Activated CD4-positive, alpha-beta T cell treated with anti-CD3 and anti-CD28 coated beads for 36 hours (primary cell): ENCODE measurements at regions of chr5 and their contacts with region 1.

Region 1: GRCh38 chr5:54944364-54944763 is 41.0 kb downstream of the ESM1 start:
- DNase-seq: peak; percentile 38
- ATAC-seq: peak; percentile 49
- H3K4me3 Mint-ChIP-seq: no peak overlapping the region
- H3K27ac Mint-ChIP-seq: no peak overlapping the region
- H3K4me1 Mint-ChIP-seq: no peaks in the 10 kb centered on the region
- H3K27me3 Mint-ChIP-seq: peaks cover 2% of the 10 kb centered on the region

Region 2: DNA sequence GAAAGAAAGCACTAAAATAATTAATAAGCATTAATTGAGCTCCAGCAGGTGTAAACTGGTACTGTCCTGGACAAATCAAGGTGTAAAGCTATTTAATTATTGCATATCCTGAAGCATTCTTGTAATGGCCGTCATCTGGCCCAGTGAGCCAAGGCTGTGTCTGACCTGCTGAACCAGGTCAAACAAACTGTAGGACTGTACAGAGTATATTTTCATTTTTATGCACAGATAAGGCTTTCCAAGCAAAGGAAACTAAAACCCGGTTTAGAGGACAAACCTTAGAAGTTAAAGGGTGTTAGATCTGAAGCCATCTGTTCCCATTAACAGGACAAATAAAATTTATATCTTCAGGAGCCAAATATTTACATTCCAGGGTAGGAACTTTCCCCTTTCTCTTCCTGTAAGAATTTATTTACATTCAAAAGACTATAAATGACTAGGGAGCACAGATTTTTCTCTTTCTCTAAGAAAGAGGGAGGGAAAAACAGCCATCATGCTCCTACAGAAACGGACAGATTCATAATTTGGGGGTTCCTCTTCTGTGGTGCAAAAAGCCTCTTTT is 28.8 kb before region 1 on chr5:
- CTCF ChIA-PET with region 1: interaction called, 12 read pairs
- POLR2A ChIA-PET with region 1: no interaction called
- intact Hi-C with region 1: no loop called
- DNase-seq: no peak
- ATAC-seq: no peak
- H3K4me3 Mint-ChIP-seq: no peak overlapping the region
- H3K27ac Mint-ChIP-seq: no peak overlapping the region
- H3K4me1 Mint-ChIP-seq: no peaks in the 10 kb centered on the region
- H3K27me3 Mint-ChIP-seq: peaks cover 19% of the 10 kb centered on the region

Region 3: GRCh38 chr5:54930736-54931135 is 13.6 kb before region 1 on chr5:
- CTCF ChIA-PET with region 1: interaction called, 22 read pairs
- POLR2A ChIA-PET with region 1: no interaction called
- intact Hi-C with region 1: no loop called
- DNase-seq: peak; percentile 27
- ATAC-seq: peak; percentile 19
- H3K4me3 Mint-ChIP-seq: no peak overlapping the region
- H3K27ac Mint-ChIP-seq: no peak overlapping the region
- H3K4me1 Mint-ChIP-seq: peaks cover 3% of the 10 kb centered on the region
- H3K27me3 Mint-ChIP-seq: peaks cover 17% of the 10 kb centered on the region

Region 4: GRCh38 chr5:54959673-54960418 is 15.5 kb after region 1 on chr5:
- CTCF ChIA-PET with region 1: interaction called, 28 read pairs
- POLR2A ChIA-PET with region 1: no interaction called
- intact Hi-C with region 1: no loop called
- DNase-seq: peak; percentile 69
- ATAC-seq: no peak
- H3K4me3 Mint-ChIP-seq: no peak overlapping the region
- H3K27ac Mint-ChIP-seq: no peak overlapping the region
- H3K4me1 Mint-ChIP-seq: no peaks in the 10 kb centered on the region
- H3K27me3 Mint-ChIP-seq: peaks cover 5% of the 10 kb centered on the region

Region 5: GRCh38 chr5:54975701-54976100 is 31.3 kb after region 1 on chr5:
- CTCF ChIA-PET with region 1: interaction called, 11 read pairs
- POLR2A ChIA-PET with region 1: no interaction called
- intact Hi-C with region 1: no loop called
- DNase-seq: no peak
- ATAC-seq: no peak
- H3K4me3 Mint-ChIP-seq: no peak overlapping the region
- H3K27ac Mint-ChIP-seq: no peak overlapping the region
- H3K4me1 Mint-ChIP-seq: peaks cover 2% of the 10 kb centered on the region
- H3K27me3 Mint-ChIP-seq: peaks cover 2% of the 10 kb centered on the region

Region 6: GRCh38 chr5:55146543-55147151 is 202.3 kb after region 1 on chr5:
- CTCF ChIA-PET with region 1: interaction called, 57 read pairs
- POLR2A ChIA-PET with region 1: interaction called, 4 read pairs
- intact Hi-C with region 1: loop called (anchors 1 kb)
- DNase-seq: peak; percentile 88
- ATAC-seq: peak; percentile 95
- H3K4me3 Mint-ChIP-seq: no peak overlapping the region
- H3K27ac Mint-ChIP-seq: no peak overlapping the region
- H3K4me1 Mint-ChIP-seq: peaks cover 15% of the 10 kb centered on the region
- H3K27me3 Mint-ChIP-seq: peaks cover 15% of the 10 kb centered on the region

Region 7: DNA sequence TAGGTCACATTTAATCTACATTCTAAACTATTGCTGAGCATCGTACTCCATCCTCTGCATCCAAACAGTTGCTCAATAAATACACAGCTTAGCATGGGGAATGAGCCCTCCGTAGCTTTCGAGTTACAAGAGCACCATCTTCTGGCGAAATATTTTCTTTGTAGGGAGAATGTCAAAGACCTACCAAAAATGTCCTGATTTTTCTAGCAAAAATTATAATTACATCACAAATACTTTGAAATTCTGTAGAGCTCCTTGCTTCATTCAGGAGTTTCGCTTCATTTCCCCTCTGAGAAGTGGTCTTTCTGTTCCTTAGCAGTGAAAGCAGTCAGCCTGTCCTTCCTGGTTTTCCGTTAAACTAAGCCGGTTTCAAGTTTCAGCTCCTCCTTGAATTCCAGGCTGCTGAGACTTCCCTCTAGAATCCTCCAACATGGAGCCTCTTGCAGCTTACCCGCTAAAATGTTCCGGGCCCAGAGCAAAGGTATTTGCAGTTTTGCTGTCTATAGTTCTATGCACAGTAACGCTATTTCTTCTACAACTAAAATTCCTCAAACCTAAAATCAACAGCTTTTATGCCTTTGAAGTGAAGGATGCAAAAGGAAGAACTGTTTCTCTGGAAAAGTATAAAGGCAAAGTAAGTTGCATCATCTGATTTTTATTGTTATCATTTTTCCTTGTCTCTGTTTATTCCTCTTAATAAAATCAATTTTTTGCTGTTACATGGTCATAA is 215.6 kb after region 1 on chr5 and contains the start of gene GPX8:
- CTCF ChIA-PET with region 1: interaction called, 27 read pairs
- POLR2A ChIA-PET with region 1: no interaction called
- intact Hi-C with region 1: no loop called
- DNase-seq: peak; percentile 27
- ATAC-seq: peak; percentile 57
- H3K4me3 Mint-ChIP-seq: no peak within 1 kb of the TSS
- H3K27ac Mint-ChIP-seq: no peak within 1 kb of the TSS
- H3K4me1 Mint-ChIP-seq: no peaks in the 10 kb centered on the region
- H3K27me3 Mint-ChIP-seq: peaks cover 37% of the 10 kb centered on the region
- total RNA-seq, gene GPX8: not detected

Region 8: GRCh38 chr5:55211157-55211839 is 266.9 kb after region 1 on chr5:
- CTCF ChIA-PET with region 1: no interaction called
- POLR2A ChIA-PET with region 1: no interaction called
- intact Hi-C with region 1: no loop called
- DNase-seq: no peak
- ATAC-seq: no peak
- H3K4me3 Mint-ChIP-seq: no peak overlapping the region
- H3K27ac Mint-ChIP-seq: no peak overlapping the region
- H3K4me1 Mint-ChIP-seq: no peaks in the 10 kb centered on the region
- H3K27me3 Mint-ChIP-seq: peaks cover 12% of the 10 kb centered on the region